ENCODE measurements at regions of chr1 and their contacts with region 1.

Region 1: GRCh38 chr1:6393400-6394187 is at the start of gene ACOT7:
- DNase-seq: peak; percentile 89 to 90
- ATAC-seq: peak; percentile 95 to 99 (median 98)
- H3K4me3 ChIP-seq: peak within 1 kb of the TSS; percentile 37 to 76 (median 66)
- H3K27ac ChIP-seq: peak within 1 kb of the TSS; percentile 86 to 99 (median 96)
- H3K4me1 ChIP-seq: peaks cover 5 to 16% (median 13%) of the 10 kb centered on the region in 9 donors
- H3K27me3 ChIP-seq: no peaks in the 10 kb centered on the region
- CTCF ChIP-seq: peak in 6 of 9 donors; percentile 8 to 56 (median 34)
- total RNA-seq, gene ACOT7: 5.1 to 26.9 (median 8.6) TPM

Region 2: DNA sequence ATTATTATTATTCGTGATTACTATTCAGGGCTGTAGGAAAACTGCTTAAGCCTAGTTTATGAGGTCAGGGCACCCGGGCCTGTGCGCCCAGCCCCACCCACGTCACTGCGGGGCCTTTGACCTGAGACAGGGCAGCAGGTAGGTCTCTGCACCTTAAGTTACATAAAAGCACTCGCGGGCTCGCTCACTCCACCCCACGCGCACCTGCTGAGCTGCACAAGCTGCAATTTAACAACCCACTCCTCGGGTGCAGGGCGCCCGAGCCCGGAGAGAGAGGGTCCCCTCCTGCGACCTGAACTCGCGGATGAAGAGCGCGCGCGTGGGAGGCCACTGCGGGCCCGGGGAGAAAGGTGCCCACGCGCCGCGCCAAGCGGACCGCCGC is 158.3 kb before region 1 on chr1:
- intact Hi-C with region 1: loop called in 1 of 10 experiments (anchors 5 kb)
- DNase-seq: no peak
- ATAC-seq: peak in 1 of 8 donors; percentile 3
- H3K4me3 ChIP-seq: peak overlapping the region; percentile 50 to 96 (median 82)
- H3K27ac ChIP-seq: peak overlapping the region; percentile 27 to 87 (median 74)
- H3K4me1 ChIP-seq: peaks cover 8 to 45% (median 34%) of the 10 kb centered on the region in 9 donors
- H3K27me3 ChIP-seq: peaks cover under 1 to 21% (median 11%) of the 10 kb centered on the region in 7 donors
- CTCF ChIP-seq: no peak

Region 3: DNA sequence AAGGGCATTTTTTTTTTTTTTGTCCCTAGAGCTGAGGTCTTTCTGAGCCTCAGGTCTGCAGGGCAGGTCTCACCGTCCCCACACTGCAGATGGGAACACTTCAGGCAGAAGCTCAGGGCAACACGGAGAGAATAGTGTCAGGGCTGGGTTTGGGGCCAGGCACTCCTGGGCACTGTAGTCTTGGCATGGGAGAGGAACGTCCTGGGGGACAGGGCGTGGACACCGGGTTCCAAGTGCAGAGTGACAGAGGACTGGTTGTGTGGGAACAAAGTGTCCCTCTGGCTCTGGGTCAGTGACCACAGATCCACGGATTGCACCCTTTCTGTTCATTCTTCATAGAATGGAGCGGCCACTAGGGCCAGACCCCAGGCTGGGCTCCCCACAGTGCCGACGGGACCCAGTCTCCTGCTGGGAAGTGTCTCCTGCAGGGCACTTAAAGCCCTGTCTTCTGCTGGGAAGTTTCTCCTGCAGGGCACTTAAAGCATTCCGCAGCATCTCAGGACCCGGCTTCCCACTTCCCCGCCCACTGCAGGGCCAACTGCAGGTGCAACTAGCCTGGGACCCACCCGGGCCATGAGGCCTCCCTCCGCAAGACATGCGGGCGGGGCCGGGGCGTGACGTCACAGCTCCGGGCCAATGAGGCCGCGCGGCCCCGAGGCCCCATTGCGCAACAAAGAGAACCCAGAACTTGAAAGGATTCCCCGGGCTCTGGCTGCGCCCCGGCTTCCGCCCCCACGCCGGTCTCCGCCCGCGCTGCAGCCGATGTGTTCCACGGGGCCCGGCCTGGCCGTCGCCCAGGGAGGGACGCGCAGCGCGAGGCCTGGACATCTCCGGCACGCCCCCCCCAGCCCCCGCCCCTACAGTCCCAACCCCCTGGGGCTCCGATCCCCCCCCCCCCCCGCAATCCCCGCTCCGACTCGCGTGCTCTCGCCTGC is 133.8 kb before region 1 on chr1:
- intact Hi-C with region 1: loop called in 1 of 10 experiments (anchors 10 kb)
- DNase-seq: peak; percentile 74 to 85
- ATAC-seq: peak; percentile 53 to 68 (median 61)
- H3K4me3 ChIP-seq: peak overlapping the region; percentile 30 to 78 (median 66)
- H3K27ac ChIP-seq: peak overlapping the region in 7 of 10 donors; percentile 65 to 78 (median 73)
- H3K4me1 ChIP-seq: peaks cover 14 to 45% (median 36%) of the 10 kb centered on the region in 9 donors
- H3K27me3 ChIP-seq: peaks cover 0 to 44% (median 32%) of the 10 kb centered on the region in 7 donors
- CTCF ChIP-seq: no peak

Region 4: DNA sequence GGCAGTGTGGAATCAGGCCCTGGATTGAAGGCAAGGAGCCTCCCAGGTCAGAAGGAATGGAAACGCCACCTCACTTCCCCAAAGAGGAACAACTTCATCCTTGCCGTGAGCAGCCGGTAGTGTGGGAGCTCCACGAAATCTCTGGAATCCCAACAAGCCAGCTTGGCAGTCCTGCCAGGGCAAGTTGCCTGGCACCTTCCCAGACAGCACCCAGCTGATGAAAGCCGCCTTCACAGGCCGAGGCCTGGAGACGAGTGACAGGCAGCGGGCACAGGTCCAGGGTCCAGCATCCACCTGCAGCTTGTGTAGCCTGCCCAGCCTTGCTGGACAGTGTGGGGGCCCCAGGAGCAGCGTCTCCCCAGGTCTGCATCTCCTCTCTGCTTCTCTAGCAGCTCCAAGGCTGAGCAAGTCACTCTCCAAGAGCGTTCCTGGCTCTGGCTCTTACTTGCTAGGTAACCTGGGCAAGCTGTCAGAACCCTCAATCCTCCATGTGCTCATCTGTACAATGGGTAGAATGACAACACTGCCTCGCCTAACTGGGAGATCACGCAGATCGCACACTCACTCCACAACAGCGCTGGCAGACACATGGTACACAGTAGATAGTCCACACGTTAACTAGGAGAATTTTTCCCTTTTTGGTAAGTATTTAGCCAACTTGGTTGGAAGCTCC is 43.0 kb before region 1 on chr1:
- intact Hi-C with region 1: loop called in 3 of 10 experiments (anchors 5 kb)
- DNase-seq: peak; percentile 82 to 84
- ATAC-seq: peak; percentile 32 to 71 (median 59)
- H3K4me3 ChIP-seq: no peak overlapping the region
- H3K27ac ChIP-seq: peak overlapping the region in 1 of 10 donors; percentile 17
- H3K4me1 ChIP-seq: peaks cover 21 to 62% (median 38%) of the 10 kb centered on the region in 9 donors
- H3K27me3 ChIP-seq: no peaks in the 10 kb centered on the region
- CTCF ChIP-seq: no peak

Region 5: DNA sequence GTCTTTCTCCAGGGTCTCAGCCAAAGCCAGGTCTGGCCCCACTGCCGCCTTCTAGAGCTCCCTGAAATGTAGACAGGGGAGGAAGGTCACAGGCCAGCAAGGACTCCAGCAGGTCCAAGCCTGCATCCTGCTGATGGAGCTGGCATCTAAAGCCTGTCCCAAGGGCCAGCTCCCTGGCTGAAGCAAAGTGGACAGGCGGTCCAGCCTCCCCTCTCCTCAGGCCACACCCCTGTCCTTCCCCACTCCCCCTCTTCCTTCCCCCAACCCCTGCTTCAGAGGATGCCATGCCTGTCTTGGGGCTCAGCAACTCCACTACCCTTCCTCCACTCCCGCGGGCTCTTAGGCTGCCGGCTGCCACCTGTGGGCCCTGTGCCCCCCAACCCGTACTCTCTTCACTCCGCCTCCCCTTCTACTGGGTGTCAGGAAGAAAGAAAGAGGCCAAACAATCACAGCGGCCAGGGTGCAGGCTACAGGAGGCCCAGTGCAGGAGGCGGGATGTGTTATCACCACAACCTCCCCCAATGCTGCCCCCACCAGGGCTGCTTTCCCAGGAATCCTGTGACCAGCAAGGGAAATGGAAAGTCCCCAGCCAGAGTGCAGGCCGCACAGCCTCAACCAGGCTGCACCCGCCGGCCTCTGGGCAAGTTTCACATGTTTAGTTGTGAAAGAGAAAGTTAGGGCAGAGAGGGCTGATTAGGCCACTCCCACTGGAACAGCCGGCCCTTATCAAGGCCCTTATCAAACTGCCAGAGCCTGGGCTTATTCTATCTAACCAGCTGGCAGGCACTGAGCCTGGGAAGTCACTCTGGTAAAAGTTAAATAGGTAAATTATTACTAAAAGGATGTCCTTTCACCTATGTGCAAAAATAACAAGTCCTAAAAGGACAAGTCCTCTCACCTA is 34.1 kb before region 1 on chr1:
- intact Hi-C with region 1: loop called in 5 of 10 experiments (anchors 5 kb)
- DNase-seq: peak; percentile 59 to 68
- ATAC-seq: peak; percentile 33 to 82 (median 75)
- H3K4me3 ChIP-seq: peak overlapping the region in 5 of 10 donors; percentile 1 to 22 (median 17)
- H3K27ac ChIP-seq: peak overlapping the region; percentile 1 to 87 (median 80)
- H3K4me1 ChIP-seq: peaks cover 14 to 39% (median 32%) of the 10 kb centered on the region in 9 donors
- H3K27me3 ChIP-seq: no peaks in the 10 kb centered on the region
- CTCF ChIP-seq: peak in 2 of 9 donors; percentile 10 to 26